Left cardiac atrium (tissue), 4 donors: ENCODE measurements at regions of chr17 and their contacts with region 1.

Region 1: GRCh38 chr17:21400816-21401593 is 24.8 kb downstream of the KCNJ12 start:
- DNase-seq: no peak
- ATAC-seq: no peak

Region 2: GRCh38 chr17:21358707-21359482 is 42.1 kb before region 1 on chr17:
- intact Hi-C with region 1: no loop called
- DNase-seq: peak; percentile 74
- ATAC-seq: peak; percentile 85 to 89

Region 3: GRCh38 chr17:21689604-21690003 is 288.6 kb after region 1 on chr17:
- intact Hi-C with region 1: loop called in 1 of 2 experiments (anchors 5 kb)
- DNase-seq: peak; percentile 77
- ATAC-seq: peak; percentile 11 to 86